Vagina (tissue), 2 donors: ENCODE measurements at regions of chr14 and their contacts with region 1.

Region 1: GRCh38 chr14:58752771-58753201 is 115.0 kb downstream of the DACT1 start:
- DNase-seq: no peak
- H3K4me3 ChIP-seq: no peak overlapping the region
- H3K27ac ChIP-seq: no peak overlapping the region
- H3K4me1 ChIP-seq: peaks cover 31% of the 10 kb centered on the region
- H3K27me3 ChIP-seq: no peaks in the 10 kb centered on the region
- CTCF ChIP-seq: no peak
- POLR2A ChIP-seq: no peak

Region 2: GRCh38 chr14:58571769-58572472 is 180.9 kb before region 1 on chr14:
- intact Hi-C with region 1: no loop called
- DNase-seq: no peak
- H3K4me3 ChIP-seq: no peak overlapping the region
- H3K27ac ChIP-seq: no peak overlapping the region
- H3K4me1 ChIP-seq: no peaks in the 10 kb centered on the region
- H3K27me3 ChIP-seq: no peaks in the 10 kb centered on the region
- CTCF ChIP-seq: no peak
- POLR2A ChIP-seq: no peak

Region 3: GRCh38 chr14:58808828-58809227 is 56.0 kb after region 1 on chr14:
- intact Hi-C with region 1: loop called (anchors 10 kb)
- DNase-seq: no peak
- H3K4me3 ChIP-seq: no peak overlapping the region
- H3K27ac ChIP-seq: no peak overlapping the region
- H3K4me1 ChIP-seq: peaks cover 8% of the 10 kb centered on the region
- H3K27me3 ChIP-seq: no peaks in the 10 kb centered on the region
- CTCF ChIP-seq: no peak
- POLR2A ChIP-seq: no peak

Region 4: GRCh38 chr14:59020382-59020781 is 267.6 kb after region 1 on chr14:
- intact Hi-C with region 1: no loop called
- DNase-seq: no peak
- H3K4me3 ChIP-seq: no peak overlapping the region
- H3K27ac ChIP-seq: no peak overlapping the region
- H3K4me1 ChIP-seq: no peaks in the 10 kb centered on the region
- H3K27me3 ChIP-seq: no peaks in the 10 kb centered on the region
- CTCF ChIP-seq: no peak
- POLR2A ChIP-seq: no peak